Pancreas (tissue), 10 donors: ENCODE measurements at regions of chr2 and their contacts with region 1.

Region 1: GRCh38 chr2:227132986-227133385 is 31.0 kb downstream of the COL4A4 start:
- DNase-seq: no peak
- ATAC-seq: no peak
- H3K4me3 ChIP-seq: no peak overlapping the region
- H3K27ac ChIP-seq: no peak overlapping the region
- H3K4me1 ChIP-seq: no peaks in the 10 kb centered on the region
- H3K27me3 ChIP-seq: no peaks in the 10 kb centered on the region
- CTCF ChIP-seq: no peak

Region 2: DNA sequence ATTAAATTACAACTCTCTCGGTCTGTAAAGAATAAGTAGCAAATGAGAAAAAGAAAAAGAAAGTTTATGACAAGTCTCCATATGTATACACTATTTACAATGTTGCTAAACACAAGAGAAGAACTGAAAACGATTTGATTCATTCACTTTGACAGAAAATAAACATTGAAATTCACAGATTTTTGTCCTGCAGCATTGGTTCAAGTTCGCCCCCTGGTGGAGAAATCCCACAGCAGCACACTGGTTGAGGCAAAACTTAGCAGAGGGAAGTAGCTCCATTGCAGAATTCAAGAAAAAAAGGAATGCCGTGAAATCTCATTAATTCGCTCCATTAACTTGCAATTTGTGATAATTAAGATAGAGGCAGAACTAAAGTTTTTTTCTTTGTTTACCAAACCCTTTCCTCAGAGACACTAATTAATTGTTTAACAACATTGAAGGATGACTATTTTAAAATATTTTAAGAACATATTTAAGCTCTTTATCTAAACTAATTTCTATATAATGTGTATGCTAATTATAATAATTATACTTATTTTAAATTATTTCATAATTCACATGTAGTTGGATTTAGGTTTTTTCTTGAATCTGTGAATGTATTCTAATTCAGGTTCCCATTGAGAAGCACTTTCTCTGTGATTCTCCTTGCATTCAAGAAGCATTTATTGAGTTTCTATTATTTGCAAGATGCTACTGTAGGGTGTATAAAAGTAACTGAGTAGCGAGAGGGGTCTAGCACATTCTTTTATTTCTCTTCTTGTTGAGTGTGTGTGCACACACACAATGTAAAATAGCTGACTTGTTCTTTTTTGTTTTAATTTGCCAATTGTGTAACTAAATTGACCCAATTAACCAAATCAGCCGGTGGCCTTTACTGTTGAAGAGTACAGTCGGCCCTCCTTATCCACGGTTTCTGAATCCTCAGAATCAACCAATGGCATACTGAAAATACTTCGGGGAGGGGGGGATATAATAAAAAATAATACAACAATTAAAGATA is 105.6 kb after region 1 on chr2:
- intact Hi-C with region 1: loop called (anchors 2 to 10 kb)
- DNase-seq: peak; percentile 44 to 85 (median 60)
- ATAC-seq: peak; percentile 53 to 84 (median 82)
- H3K4me3 ChIP-seq: no peak overlapping the region
- H3K27ac ChIP-seq: no peak overlapping the region
- H3K4me1 ChIP-seq: no peaks in the 10 kb centered on the region
- H3K27me3 ChIP-seq: no peaks in the 10 kb centered on the region
- CTCF ChIP-seq: peak; percentile 80 to 92 (median 90)

Region 3: DNA sequence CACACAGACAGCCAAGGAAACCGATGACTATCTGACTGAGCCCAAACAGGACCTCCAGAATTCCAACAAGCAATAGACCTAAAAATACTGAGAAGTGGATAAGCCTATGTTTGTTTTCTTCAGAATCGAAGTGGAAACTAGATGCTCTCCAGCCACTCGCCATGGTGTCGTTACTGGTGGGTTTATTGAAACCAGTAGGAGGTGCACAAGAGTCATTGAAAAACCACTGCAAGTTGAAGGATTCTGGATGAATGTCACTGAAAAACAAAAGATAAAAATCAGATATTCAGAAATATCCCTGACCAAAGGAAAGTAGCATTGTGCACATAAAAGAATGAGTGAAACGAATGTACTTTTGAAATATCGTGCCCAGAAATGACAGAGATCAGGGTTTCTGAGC is 230.8 kb after region 1 on chr2:
- intact Hi-C with region 1: no loop called
- DNase-seq: no peak
- ATAC-seq: no peak
- H3K4me3 ChIP-seq: no peak overlapping the region
- H3K27ac ChIP-seq: no peak overlapping the region
- H3K4me1 ChIP-seq: peaks cover 0 to 5% (median 4%) of the 10 kb centered on the region in 3 donors
- H3K27me3 ChIP-seq: no peaks in the 10 kb centered on the region
- CTCF ChIP-seq: no peak